ENCODE measurements at regions of chr11 and their contacts with region 1.

Region 1: DNA sequence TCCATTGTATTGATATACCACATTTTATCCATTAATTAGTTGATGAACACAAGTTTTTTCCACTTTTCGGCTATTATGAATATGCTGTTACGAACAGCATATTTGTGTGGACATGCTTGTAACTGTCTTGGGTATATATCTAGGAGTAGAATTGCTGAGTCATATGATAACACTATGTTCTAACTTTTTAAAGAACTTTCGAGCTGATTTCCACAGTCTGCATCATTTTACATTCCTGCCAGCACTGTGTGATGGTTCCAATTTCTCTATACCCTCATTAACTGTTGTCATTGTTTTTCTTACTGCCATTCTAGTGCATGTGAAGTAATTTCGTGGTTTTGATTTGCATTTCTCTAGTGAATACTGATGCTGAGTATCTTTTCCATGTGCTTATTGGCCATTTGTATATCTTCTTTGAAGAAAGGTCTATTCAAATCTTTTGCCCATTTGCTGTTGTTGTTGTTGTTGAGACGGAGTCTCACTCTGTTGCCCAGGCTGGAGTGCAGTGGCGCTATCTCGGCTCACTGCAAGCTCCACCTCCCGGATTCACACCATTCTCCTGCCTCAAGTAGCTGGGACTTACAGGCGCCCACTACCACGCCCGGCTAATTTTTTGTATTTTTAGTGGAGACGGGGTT is 7.4 kb upstream of the RCE1 start:
- DNase-seq: no peak
- ATAC-seq: no peak
- H3K4me3 ChIP-seq: no peak overlapping the region
- H3K27ac ChIP-seq: no peak overlapping the region
- H3K4me1 ChIP-seq: no peaks in the 10 kb centered on the region
- H3K27me3 ChIP-seq: no peaks in the 10 kb centered on the region

Region 2: GRCh38 chr11:66408488-66409214 is 427.2 kb before region 1 on chr11:
- intact Hi-C with region 1: loop called in 2 of 4 experiments (anchors 10 kb)
- DNase-seq: peak; percentile 93 to 96 (median 95)
- ATAC-seq: peak; percentile 93 to 95
- H3K4me3 ChIP-seq: peak overlapping the region; percentile 34
- H3K27ac ChIP-seq: no peak overlapping the region
- H3K4me1 ChIP-seq: no peaks in the 10 kb centered on the region
- H3K27me3 ChIP-seq: no peaks in the 10 kb centered on the region

Region 3: GRCh38 chr11:66579017-66579606 is 256.8 kb before region 1 on chr11:
- intact Hi-C with region 1: loop called in 3 of 4 experiments (anchors 5 to 10 kb)
- DNase-seq: peak; percentile 87 to 94 (median 92)
- ATAC-seq: peak; percentile 92 to 96
- H3K4me3 ChIP-seq: no peak overlapping the region
- H3K27ac ChIP-seq: no peak overlapping the region
- H3K4me1 ChIP-seq: no peaks in the 10 kb centered on the region
- H3K27me3 ChIP-seq: no peaks in the 10 kb centered on the region

Region 4: GRCh38 chr11:66694732-66695207 is 141.1 kb before region 1 on chr11:
- intact Hi-C with region 1: loop called (anchors 2 to 10 kb)
- DNase-seq: peak; percentile 86 to 93 (median 92)
- ATAC-seq: peak; percentile 84 to 86
- H3K4me3 ChIP-seq: no peak overlapping the region
- H3K27ac ChIP-seq: no peak overlapping the region
- H3K4me1 ChIP-seq: no peaks in the 10 kb centered on the region
- H3K27me3 ChIP-seq: no peaks in the 10 kb centered on the region

Region 5: DNA sequence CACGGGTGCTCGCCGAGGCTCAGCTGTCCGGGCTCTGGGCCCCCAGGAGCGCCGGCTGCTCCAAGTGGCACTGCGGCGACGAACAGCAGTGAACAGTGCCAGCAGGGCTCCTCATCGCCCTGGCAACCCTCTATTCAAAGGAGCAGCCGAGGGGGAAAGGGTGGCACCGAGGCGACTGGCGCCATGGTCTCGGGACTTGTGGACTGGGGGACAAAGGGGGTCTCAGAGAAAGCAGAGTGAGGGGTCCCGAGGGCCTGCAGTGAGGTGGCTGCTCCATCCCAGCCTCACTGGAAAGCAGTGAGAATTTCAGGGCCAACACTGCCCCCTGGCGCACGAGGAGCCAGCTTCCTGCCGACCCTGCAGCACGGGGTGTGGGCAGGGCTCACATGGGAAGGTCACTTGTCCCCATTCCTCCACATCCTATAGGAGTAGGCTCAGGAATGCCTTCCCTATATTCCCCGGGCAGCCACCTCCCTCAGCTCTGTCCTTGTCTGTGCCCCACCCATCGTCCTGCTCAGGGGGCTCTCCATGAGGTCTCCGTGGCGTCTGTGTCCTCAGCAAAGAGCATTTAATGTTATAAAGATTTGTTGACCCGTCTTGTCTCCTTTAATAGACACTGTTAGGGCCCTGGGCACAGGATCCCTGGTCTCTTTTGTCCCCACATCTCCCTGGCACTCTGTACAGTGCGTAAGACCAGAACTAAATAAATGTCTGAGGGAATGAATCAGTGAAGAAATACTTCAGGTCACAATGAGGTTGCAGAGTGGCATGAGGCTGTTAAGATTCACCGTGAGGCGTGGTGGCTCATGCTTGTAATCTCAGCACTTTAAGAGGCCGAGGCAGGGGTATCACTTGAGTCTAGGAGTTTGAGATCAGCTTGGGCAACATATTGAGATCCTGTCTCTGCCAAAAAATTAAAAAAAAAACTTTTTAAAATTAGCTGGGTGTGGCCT is 47.4 kb after region 1 on chr11:
- intact Hi-C with region 1: no loop called
- DNase-seq: peak; percentile 58 to 84 (median 76)
- ATAC-seq: peak; percentile 50 to 69
- H3K4me3 ChIP-seq: no peak overlapping the region
- H3K27ac ChIP-seq: no peak overlapping the region
- H3K4me1 ChIP-seq: no peaks in the 10 kb centered on the region
- H3K27me3 ChIP-seq: no peaks in the 10 kb centered on the region

Measured in right cardiac atrium (tissue), 5 donors.